ENCODE measurements at regions of chr4 and their contacts with region 1.

Region 1: GRCh38 chr4:101187841-101188240 is 159.5 kb downstream of the PPP3CA start:
- DNase-seq: peak in 2 of 9 experiments; percentile 33 to 41
- ATAC-seq: no peak
- H3K4me3 ChIP-seq: no peak overlapping the region
- H3K4me3 Mint-ChIP-seq: no peak overlapping the region
- H3K27ac ChIP-seq: no peak overlapping the region
- H3K27ac Mint-ChIP-seq: no peak overlapping the region
- H3K4me1 ChIP-seq: peaks cover 4% of the 10 kb centered on the region
- H3K4me1 Mint-ChIP-seq: peaks cover 22% of the 10 kb centered on the region
- H3K27me3 ChIP-seq: no peaks in the 10 kb centered on the region
- H3K27me3 Mint-ChIP-seq: no peaks in the 10 kb centered on the region
- CTCF ChIP-seq: peak; percentile 47

Region 2: GRCh38 chr4:101211146-101211908 is 23.5 kb after region 1 on chr4:
- CTCF ChIA-PET with region 1: no interaction called
- POLR2A ChIA-PET with region 1: no interaction called
- intact Hi-C with region 1: no loop called
- DNase-seq: no peak
- ATAC-seq: no peak
- H3K4me3 ChIP-seq: no peak overlapping the region
- H3K4me3 Mint-ChIP-seq: no peak overlapping the region
- H3K27ac ChIP-seq: no peak overlapping the region
- H3K27ac Mint-ChIP-seq: no peak overlapping the region
- H3K4me1 ChIP-seq: peaks cover 5% of the 10 kb centered on the region
- H3K4me1 Mint-ChIP-seq: peaks cover 27% of the 10 kb centered on the region
- H3K27me3 ChIP-seq: no peaks in the 10 kb centered on the region
- H3K27me3 Mint-ChIP-seq: no peaks in the 10 kb centered on the region
- CTCF ChIP-seq: no peak

Region 3: DNA sequence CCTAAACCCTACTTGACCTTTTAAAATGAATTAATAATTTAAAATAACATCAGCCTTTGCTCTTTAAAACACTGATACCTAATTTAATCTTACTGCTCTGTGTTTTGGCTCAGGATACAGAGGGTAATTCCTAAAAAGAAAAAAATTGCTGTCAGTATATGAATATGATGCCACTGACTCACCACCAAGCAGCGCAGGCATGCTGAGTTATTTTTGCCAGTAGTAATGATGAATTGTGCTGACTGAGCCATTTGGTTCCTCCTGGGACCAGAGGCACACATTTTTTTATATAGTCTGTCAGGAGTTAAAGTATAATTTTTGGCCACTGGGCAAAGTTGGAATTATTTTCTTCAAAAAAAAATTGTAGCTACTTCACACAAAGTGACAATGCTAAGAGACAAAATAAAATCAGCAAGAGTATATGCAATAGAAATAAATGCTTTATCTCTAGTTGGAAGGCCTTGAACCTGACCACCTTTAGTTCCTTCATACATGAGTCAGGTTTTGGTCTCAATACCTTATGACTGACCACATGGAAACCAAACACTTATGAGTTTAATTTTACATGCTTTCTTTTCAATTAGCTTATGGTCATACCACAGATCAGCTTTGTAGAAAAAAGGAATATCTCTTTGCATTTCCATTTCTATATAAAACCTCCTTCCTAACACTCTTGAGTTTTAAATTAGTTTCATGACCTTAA is 44.4 kb after region 1 on chr4:
- CTCF ChIA-PET with region 1: no interaction called
- POLR2A ChIA-PET with region 1: no interaction called
- intact Hi-C with region 1: no loop called
- DNase-seq: no peak
- ATAC-seq: no peak
- H3K4me3 ChIP-seq: no peak overlapping the region
- H3K4me3 Mint-ChIP-seq: no peak overlapping the region
- H3K27ac ChIP-seq: no peak overlapping the region
- H3K27ac Mint-ChIP-seq: no peak overlapping the region
- H3K4me1 ChIP-seq: no peaks in the 10 kb centered on the region
- H3K4me1 Mint-ChIP-seq: peaks cover 19% of the 10 kb centered on the region
- H3K27me3 ChIP-seq: no peaks in the 10 kb centered on the region
- H3K27me3 Mint-ChIP-seq: no peaks in the 10 kb centered on the region
- CTCF ChIP-seq: no peak

Region 4: GRCh38 chr4:101439926-101440325 is 252.1 kb after region 1 on chr4:
- CTCF ChIA-PET with region 1: no interaction called
- POLR2A ChIA-PET with region 1: no interaction called
- intact Hi-C with region 1: loop called in 1 of 2 experiments (anchors 10 kb)
- DNase-seq: no peak
- ATAC-seq: no peak
- H3K4me3 ChIP-seq: no peak overlapping the region
- H3K4me3 Mint-ChIP-seq: no peak overlapping the region
- H3K27ac ChIP-seq: no peak overlapping the region
- H3K27ac Mint-ChIP-seq: no peak overlapping the region
- H3K4me1 ChIP-seq: no peaks in the 10 kb centered on the region
- H3K4me1 Mint-ChIP-seq: no peaks in the 10 kb centered on the region
- H3K27me3 ChIP-seq: no peaks in the 10 kb centered on the region
- H3K27me3 Mint-ChIP-seq: peaks cover 20% of the 10 kb centered on the region
- CTCF ChIP-seq: no peak

Region 5: DNA sequence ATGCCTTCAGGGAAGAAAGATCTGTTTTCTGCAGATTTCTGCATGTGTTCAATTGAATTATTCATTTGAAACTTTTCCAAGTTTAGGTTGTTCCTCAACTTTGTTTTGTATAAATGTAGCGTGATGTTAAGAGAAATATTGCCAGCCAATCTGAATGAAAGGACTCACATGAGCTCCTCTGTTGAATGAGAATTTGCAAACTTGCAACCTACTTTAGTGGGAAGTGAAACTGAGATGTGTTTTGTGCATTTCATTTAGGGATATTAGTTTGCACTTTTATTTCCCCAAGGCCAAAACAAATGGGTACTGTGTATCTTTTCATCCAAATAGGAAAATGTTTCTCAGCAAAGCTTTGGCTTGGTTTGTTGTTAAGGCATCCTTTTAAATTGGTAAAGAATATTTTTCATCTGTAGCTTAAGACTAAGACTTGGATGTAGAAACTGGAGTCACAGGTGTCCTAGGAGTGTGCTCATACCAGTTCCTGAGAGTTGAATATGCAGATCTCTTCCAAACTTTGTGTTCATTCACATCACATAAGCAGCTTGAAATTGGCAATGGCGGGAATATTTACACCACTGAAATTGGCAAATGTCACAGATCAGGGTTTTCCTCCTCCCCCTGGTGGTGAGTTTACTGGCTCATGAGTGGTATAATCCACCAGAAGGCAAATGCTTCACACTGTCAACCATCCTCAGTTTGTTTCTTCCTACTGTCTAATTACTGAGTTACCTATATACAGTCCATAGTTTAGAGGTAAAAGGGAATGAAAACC is 409.1 kb after region 1 on chr4:
- CTCF ChIA-PET with region 1: interaction called, 6 read pairs
- POLR2A ChIA-PET with region 1: no interaction called
- intact Hi-C with region 1: loop called in 1 of 2 experiments (anchors 5 kb)
- DNase-seq: peak in 6 of 9 experiments; percentile 7 to 64 (median 43)
- ATAC-seq: peak; percentile 54
- H3K4me3 ChIP-seq: no peak overlapping the region
- H3K4me3 Mint-ChIP-seq: no peak overlapping the region
- H3K27ac ChIP-seq: no peak overlapping the region
- H3K27ac Mint-ChIP-seq: no peak overlapping the region
- H3K4me1 ChIP-seq: no peaks in the 10 kb centered on the region
- H3K4me1 Mint-ChIP-seq: no peaks in the 10 kb centered on the region
- H3K27me3 ChIP-seq: no peaks in the 10 kb centered on the region
- H3K27me3 Mint-ChIP-seq: no peaks in the 10 kb centered on the region
- CTCF ChIP-seq: peak; percentile 49

Region 6: DNA sequence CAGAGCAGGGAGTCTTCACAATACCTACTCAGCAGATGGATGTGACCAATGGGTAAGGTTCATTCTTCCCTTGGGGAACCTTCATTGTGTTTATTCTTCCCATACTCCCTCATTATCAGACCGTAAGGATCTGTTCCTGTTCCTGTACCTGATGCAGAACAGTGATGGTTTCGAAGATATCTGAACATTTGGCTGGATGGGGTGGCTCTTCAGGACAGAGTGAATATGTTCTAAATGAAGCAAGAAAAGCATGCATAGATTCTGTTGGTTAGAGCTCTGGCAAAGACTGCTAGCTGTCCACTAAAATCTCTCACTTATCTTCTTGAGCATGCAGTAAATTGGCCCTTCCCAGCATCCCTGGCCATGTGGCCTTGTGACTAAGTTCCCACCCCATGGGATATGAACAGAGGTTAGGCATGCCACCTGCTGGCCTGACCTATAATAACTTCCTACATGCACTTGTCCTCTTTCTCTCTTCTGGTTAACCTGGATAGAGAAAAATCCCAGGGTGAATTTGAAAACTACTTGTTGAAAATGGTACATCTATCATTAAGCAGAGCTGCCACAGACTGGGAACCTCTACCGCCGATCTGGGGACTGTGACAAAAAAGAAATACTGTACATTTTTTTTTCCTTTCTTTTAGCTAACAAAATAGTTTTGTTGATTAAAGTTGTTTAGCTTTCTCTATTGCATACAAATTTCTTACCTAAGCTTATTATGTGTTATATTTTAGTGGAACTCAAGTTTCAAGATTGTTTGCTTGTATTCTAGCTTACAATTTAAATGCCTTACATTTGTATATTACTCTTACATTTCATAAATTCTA is 542.7 kb after region 1 on chr4:
- CTCF ChIA-PET with region 1: interaction called, 6 read pairs
- POLR2A ChIA-PET with region 1: no interaction called
- intact Hi-C with region 1: loop called in 1 of 2 experiments (anchors 5 kb)
- DNase-seq: peak in 7 of 9 experiments; percentile 24 to 69 (median 48)
- ATAC-seq: peak; percentile 67
- H3K4me3 ChIP-seq: no peak overlapping the region
- H3K4me3 Mint-ChIP-seq: no peak overlapping the region
- H3K27ac ChIP-seq: no peak overlapping the region
- H3K27ac Mint-ChIP-seq: no peak overlapping the region
- H3K4me1 ChIP-seq: no peaks in the 10 kb centered on the region
- H3K4me1 Mint-ChIP-seq: no peaks in the 10 kb centered on the region
- H3K27me3 ChIP-seq: no peaks in the 10 kb centered on the region
- H3K27me3 Mint-ChIP-seq: peaks cover 5% of the 10 kb centered on the region
- CTCF ChIP-seq: peak; percentile 65

Measured in CD8-positive, alpha-beta T cell (primary cell).